Brain microvascular endothelial cell (primary cell): ENCODE measurements at regions of chr9 and their contacts with region 1.

Region 1: GRCh38 chr9:99140685-99141314 is 35.9 kb downstream of the TGFBR1 start:
- DNase-seq: peak; percentile 51
- H3K4me3 ChIP-seq: no peak overlapping the region
- H3K27ac ChIP-seq: peak overlapping the region; percentile 21
- H3K27me3 ChIP-seq: no peaks in the 10 kb centered on the region
- CTCF ChIP-seq: peak; percentile 96

Region 2: GRCh38 chr9:98848450-98849149 is 292.2 kb before region 1 on chr9:
- in situ Hi-C with region 1: loop called (anchors 25 kb)
- DNase-seq: peak; percentile 83
- H3K4me3 ChIP-seq: peak overlapping the region; percentile 4
- H3K27ac ChIP-seq: no peak overlapping the region
- H3K27me3 ChIP-seq: no peaks in the 10 kb centered on the region
- CTCF ChIP-seq: peak; percentile 96

Region 3: DNA sequence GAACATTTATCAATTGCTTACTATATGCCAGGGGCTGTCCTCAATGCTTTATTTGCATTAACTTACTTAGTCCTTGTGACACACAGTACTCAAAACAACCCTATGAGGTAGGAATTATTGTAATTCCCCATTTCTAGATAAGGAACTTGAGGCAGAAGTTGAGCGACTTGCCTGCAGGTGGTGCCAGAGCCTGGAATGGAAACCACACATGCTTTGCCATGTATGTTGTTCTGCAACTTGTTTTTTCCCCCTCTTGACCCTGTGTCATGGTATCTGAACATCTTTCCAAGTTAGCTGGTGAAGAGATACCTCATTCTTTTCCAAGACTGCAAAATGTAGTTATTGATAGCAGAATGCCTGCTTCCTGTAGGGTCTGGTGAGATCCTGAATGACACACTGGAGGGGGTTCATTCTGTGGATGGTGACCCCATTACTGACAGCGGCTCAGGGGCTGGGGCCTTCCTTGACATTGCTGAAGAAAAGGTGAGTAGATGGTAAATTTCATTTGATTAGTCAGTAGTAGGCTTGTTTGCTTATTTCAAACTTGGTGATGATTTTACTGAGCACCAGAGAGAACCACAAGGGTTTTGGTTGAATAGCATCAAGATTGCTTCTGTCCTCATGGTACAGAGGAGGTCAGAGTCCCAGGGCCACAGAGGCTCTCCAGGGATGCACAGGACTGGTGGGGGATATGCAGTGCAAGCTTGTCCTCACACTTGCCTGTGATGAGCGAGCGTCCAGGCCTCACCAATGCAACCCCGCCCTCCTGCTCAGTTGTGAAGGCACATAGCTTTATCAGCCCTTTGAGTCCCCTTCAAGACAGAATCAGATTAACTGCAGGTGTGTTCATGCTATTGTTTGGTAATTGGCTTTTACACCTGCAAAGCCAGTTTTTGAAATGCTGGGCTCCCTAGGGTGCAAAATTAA is 140.1 kb before region 1 on chr9:
- in situ Hi-C with region 1: loop called (anchors 10 kb)
- DNase-seq: peak; percentile 79
- H3K4me3 ChIP-seq: no peak overlapping the region
- H3K27ac ChIP-seq: no peak overlapping the region
- H3K27me3 ChIP-seq: no peaks in the 10 kb centered on the region
- CTCF ChIP-seq: peak; percentile 90